ENCODE measurements at regions of chr2 and their contacts with region 1.

Region 1: GRCh38 chr2:177148477-177149154 is 64.0 kb upstream of the HNRNPA3 start:
- DNase-seq: peak; percentile 78
- H3K4me3 Mint-ChIP-seq: peak overlapping the region; percentile 80
- H3K27ac Mint-ChIP-seq: no peak overlapping the region
- H3K4me1 Mint-ChIP-seq: peaks cover 21% of the 10 kb centered on the region
- H3K27me3 Mint-ChIP-seq: peaks cover 58% of the 10 kb centered on the region

Region 2: DNA sequence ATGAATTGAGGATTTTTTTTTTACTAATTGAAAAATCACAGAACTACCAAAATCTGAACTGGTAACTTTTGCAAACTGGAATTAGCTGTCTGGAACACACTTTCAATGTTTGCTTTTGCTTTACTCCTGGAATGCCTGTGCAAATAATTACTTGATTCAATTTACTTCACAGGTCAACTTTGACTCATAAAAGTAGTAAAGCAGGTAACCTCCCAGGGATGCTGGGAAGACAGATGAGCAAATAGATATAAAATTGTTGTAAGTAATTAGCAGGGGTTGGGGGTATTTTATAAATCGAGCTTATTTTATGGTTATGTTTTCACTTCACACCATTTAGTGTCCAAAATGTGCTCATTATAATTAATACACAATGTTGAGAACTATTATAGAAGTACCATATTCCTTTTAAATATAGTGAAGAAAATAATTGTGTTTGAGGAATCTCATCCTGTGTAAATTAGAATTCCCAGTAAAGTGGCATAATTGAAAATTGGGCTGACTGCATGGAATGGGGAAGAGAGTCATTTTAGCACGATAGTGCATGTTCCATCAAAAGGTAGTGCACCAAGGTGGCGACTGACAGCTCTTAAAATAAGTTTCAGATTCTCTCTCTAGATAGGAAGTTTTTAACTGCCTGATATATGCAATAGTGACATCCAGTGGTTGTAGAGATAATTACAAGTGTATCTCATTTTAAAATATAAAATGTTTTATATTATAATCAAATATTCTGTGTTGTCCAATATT is 334.1 kb before region 1 on chr2:
- CTCF ChIA-PET with region 1: interaction called, 31 read pairs
- POLR2A ChIA-PET with region 1: interaction called, 4 read pairs
- DNase-seq: no peak
- H3K4me3 Mint-ChIP-seq: no peak overlapping the region
- H3K27ac Mint-ChIP-seq: no peak overlapping the region
- H3K4me1 Mint-ChIP-seq: peaks cover 4% of the 10 kb centered on the region
- H3K27me3 Mint-ChIP-seq: peaks cover 5% of the 10 kb centered on the region

Region 3: GRCh38 chr2:176826984-176827668 is 321.5 kb before region 1 on chr2:
- CTCF ChIA-PET with region 1: interaction called, 10 read pairs
- POLR2A ChIA-PET with region 1: no interaction called
- DNase-seq: no peak
- H3K4me3 Mint-ChIP-seq: no peak overlapping the region
- H3K27ac Mint-ChIP-seq: no peak overlapping the region
- H3K4me1 Mint-ChIP-seq: peaks cover 22% of the 10 kb centered on the region
- H3K27me3 Mint-ChIP-seq: peaks cover 15% of the 10 kb centered on the region

Region 4: GRCh38 chr2:177078416-177078815 is 70.2 kb before region 1 on chr2:
- CTCF ChIA-PET with region 1: no interaction called
- POLR2A ChIA-PET with region 1: no interaction called
- DNase-seq: no peak
- H3K4me3 Mint-ChIP-seq: no peak overlapping the region
- H3K27ac Mint-ChIP-seq: no peak overlapping the region
- H3K4me1 Mint-ChIP-seq: no peaks in the 10 kb centered on the region
- H3K27me3 Mint-ChIP-seq: peaks cover 14% of the 10 kb centered on the region